HEK293 (cell line): ENCODE measurements at regions of chr18 and their contacts with region 1.

Region 1: GRCh38 chr18:46148810-46149209 is 44.6 kb downstream of the HAUS1 start:
- H3K4me3 ChIP-seq: no peak overlapping the region
- H3K27ac ChIP-seq: no peak overlapping the region
- H3K4me1 ChIP-seq: peaks cover 8% of the 10 kb centered on the region
- CTCF ChIP-seq: 0 out of 2 replicates have a peak, but pooled peaks have one; percentile 45

Region 2: GRCh38 chr18:46067431-46068007 is 81.3 kb before region 1 on chr18:
- CTCF ChIA-PET with region 1: no interaction called
- POLR2A ChIA-PET with region 1: no interaction called
- H3K4me3 ChIP-seq: no peak overlapping the region
- H3K27ac ChIP-seq: no peak overlapping the region
- H3K4me1 ChIP-seq: no peaks in the 10 kb centered on the region
- CTCF ChIP-seq: no peak

Region 3: DNA sequence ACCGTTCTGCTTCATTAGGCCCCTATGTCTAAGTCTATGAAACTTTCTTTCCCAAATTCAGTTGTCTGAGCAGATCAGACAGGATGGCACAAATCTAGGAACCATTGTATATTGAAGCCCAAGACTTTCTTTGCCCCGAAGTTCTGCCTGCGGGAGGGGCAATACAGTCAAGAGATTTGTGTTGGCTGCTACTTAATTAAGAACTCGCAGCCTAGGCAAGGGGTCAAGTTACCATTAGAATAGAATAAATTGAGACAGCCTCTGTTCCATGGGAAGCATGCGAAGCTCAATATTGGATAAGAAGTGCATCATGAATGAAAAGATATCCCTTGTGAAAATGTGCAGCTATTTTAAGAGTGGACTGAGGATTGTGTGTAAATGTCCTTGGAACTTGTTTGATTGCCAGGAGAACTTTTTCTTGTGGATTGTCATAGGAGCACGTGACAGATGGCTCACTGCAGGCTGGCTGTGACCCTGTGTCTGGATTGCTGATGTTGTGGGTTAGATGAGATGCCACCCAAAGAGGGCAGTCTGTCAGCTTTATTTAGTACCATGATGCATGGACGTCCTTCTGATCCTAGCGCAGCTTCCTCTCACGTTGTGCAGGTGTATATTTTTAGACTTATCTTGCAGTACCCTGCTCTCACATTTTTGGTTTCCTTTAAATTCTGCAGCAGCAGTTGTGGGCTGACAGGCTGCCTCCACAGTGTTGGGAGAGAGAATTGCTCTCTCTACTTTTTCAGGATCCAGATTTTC is 13.7 kb before region 1 on chr18:
- CTCF ChIA-PET with region 1: interaction called, 16 read pairs
- POLR2A ChIA-PET with region 1: no interaction called
- H3K4me3 ChIP-seq: no peak overlapping the region
- H3K27ac ChIP-seq: no peak overlapping the region
- H3K4me1 ChIP-seq: no peaks in the 10 kb centered on the region
- CTCF ChIP-seq: no peak

Region 4: GRCh38 chr18:46213295-46213694 is 64.5 kb after region 1 on chr18:
- CTCF ChIA-PET with region 1: interaction called, 12 read pairs
- POLR2A ChIA-PET with region 1: no interaction called
- H3K4me3 ChIP-seq: no peak overlapping the region
- H3K27ac ChIP-seq: no peak overlapping the region
- H3K4me1 ChIP-seq: peaks cover 14% of the 10 kb centered on the region
- CTCF ChIP-seq: no peak